K562 (cell line): ENCODE measurements at regions of chr11 and their contacts with region 1.

Region 1: GRCh38 chr11:34075178-34075820 is 23.8 kb downstream of the CAPRIN1 start:
- DNase-seq: no peak
- ATAC-seq: no peak
- H3K4me3 ChIP-seq: no peak overlapping the region
- H3K27ac ChIP-seq: no peak overlapping the region
- H3K4me1 ChIP-seq: no peaks in the 10 kb centered on the region
- H3K27me3 ChIP-seq: no peaks in the 10 kb centered on the region
- CTCF ChIP-seq: no peak
- EP300 ChIP-seq: no peak
- POLR2A ChIP-seq: no peak
- RAD21 ChIP-seq: no peak

Region 2: GRCh38 chr11:34086554-34087283 is 11.4 kb after region 1 on chr11:
- CTCF ChIA-PET with region 1: no interaction called
- POLR2A ChIA-PET with region 1: interaction called, 16 read pairs
- in situ Hi-C with region 1: no loop called
- intact Hi-C with region 1: no loop called
- DNase-seq: no peak
- ATAC-seq: no peak
- H3K4me3 ChIP-seq: no peak overlapping the region
- H3K27ac ChIP-seq: no peak overlapping the region
- H3K4me1 ChIP-seq: no peaks in the 10 kb centered on the region
- H3K27me3 ChIP-seq: no peaks in the 10 kb centered on the region
- CTCF ChIP-seq: no peak
- EP300 ChIP-seq: no peak
- POLR2A ChIP-seq: no peak
- RAD21 ChIP-seq: no peak